Activated CD4-positive, alpha-beta memory T cell treated with anti-CD3 and anti-CD28 coated beads, Interleukin-2, amount 10 ng/mL, durations not matched to agents 7 days and 5 days (primary cell): ENCODE measurements at regions of chr9 and their contacts with region 1.

Region 1: GRCh38 chr9:83972286-83972685 is 7.7 kb downstream of the HNRNPK start:
- DNase-seq: no peak
- H3K4me3 Mint-ChIP-seq: no peak overlapping the region
- H3K27ac Mint-ChIP-seq: no peak overlapping the region
- H3K4me1 Mint-ChIP-seq: peaks cover 50% of the 10 kb centered on the region
- H3K27me3 Mint-ChIP-seq: no peaks in the 10 kb centered on the region

Region 2: GRCh38 chr9:83956434-83957247 is 15.6 kb before region 1 on chr9:
- CTCF ChIA-PET with region 1: interaction called, 4 read pairs
- POLR2A ChIA-PET with region 1: interaction called, 30 read pairs
- DNase-seq: peak; percentile 74
- H3K4me3 Mint-ChIP-seq: peak overlapping the region; percentile 93
- H3K27ac Mint-ChIP-seq: peak overlapping the region; percentile 86
- H3K4me1 Mint-ChIP-seq: peaks cover 22% of the 10 kb centered on the region
- H3K27me3 Mint-ChIP-seq: no peaks in the 10 kb centered on the region